Tibial artery (tissue), 4 donors: ENCODE measurements at regions of chr11 and their contacts with region 1.

Region 1: DNA sequence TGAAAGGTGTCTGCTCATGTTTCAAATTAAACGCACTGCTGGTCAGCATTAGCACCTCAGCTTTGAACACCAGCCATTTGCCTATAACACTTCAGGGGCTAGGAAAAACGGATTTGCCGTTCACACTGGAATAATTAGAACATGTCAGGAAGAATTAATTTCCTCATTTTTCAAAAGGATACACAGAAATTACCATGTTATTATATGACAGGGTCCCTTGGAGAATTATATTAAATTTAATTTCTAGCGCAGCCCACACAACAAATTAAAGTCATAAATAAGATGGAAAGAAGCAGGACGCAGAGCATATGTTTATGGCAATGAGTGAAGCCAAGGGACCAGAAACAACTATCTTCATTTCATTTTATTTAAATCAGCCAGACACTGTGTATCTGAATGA is 83.8 kb upstream of the SOX6 start:
- DNase-seq: no peak
- H3K4me3 ChIP-seq: no peak overlapping the region
- H3K27ac ChIP-seq: no peak overlapping the region
- H3K4me1 ChIP-seq: no peaks in the 10 kb centered on the region
- H3K27me3 ChIP-seq: no peaks in the 10 kb centered on the region
- CTCF ChIP-seq: no peak

Region 2: GRCh38 chr11:16169541-16169940 is 270.6 kb before region 1 on chr11:
- intact Hi-C with region 1: no loop called
- DNase-seq: no peak
- H3K4me3 ChIP-seq: no peak overlapping the region
- H3K27ac ChIP-seq: no peak overlapping the region
- H3K4me1 ChIP-seq: peaks cover 0 to 11% (median 0%) of the 10 kb centered on the region in 4 donors
- H3K27me3 ChIP-seq: no peaks in the 10 kb centered on the region
- CTCF ChIP-seq: no peak

Region 3: DNA sequence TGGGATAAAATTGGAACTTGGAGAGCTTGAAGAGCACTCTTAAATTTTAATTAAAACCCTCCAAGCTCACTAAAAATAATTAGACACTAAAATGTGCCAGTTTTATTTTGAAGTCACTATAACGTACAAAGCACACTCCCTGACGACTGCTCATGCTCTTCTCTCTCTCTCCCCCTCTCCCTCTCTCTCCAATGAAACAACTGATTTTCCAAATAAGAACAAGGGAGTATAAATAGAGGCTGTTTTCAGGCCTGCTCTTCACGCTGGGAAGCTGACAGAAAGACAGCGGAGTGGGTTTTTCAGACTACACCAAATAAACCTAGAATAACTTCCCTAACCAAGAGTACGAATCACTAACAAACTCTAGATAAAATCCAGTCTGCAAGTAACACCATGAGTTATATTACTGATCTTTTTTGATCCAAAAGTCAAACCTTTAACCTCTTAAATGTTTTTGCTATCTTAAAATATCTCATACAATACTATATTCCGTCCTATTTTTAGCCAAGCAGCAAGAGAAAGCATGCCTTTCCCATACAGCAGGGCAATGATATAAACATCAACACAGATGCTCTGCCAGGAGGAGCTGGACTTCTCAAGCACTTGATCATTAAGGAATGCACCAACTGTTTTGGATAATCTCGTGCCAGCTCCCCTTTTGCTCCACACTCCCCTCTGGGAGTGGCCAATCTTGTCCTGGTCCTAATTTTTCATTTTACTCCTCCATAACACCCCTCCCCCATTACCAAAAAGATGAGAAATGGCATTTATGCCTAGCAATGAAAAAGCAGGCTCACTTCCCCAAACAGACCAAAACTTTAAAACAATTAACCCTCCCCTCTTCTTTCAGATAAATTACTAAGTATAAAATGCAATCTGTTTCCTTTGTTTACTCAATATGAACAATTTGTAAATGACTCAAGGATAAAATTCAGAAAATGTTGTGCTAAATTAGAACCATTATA is 200.7 kb before region 1 on chr11:
- intact Hi-C with region 1: no loop called
- DNase-seq: no peak
- H3K4me3 ChIP-seq: peak overlapping the region; percentile 2 to 16
- H3K27ac ChIP-seq: peak overlapping the region; percentile 58 to 72
- H3K4me1 ChIP-seq: peaks cover 0 to 40% (median 0%) of the 10 kb centered on the region in 4 donors
- H3K27me3 ChIP-seq: no peaks in the 10 kb centered on the region
- CTCF ChIP-seq: no peak

Region 4: GRCh38 chr11:16412525-16413172 is 27.5 kb before region 1 on chr11:
- intact Hi-C with region 1: no loop called
- DNase-seq: no peak
- H3K4me3 ChIP-seq: no peak overlapping the region
- H3K27ac ChIP-seq: no peak overlapping the region
- H3K4me1 ChIP-seq: peaks cover 0 to 14% (median 2%) of the 10 kb centered on the region in 4 donors
- H3K27me3 ChIP-seq: no peaks in the 10 kb centered on the region
- CTCF ChIP-seq: no peak

Region 5: GRCh38 chr11:16561150-16561549 is 121.0 kb after region 1 on chr11:
- intact Hi-C with region 1: no loop called
- DNase-seq: no peak
- H3K4me3 ChIP-seq: no peak overlapping the region
- H3K27ac ChIP-seq: no peak overlapping the region
- H3K4me1 ChIP-seq: peaks cover 0 to 5% (median 0%) of the 10 kb centered on the region in 4 donors
- H3K27me3 ChIP-seq: no peaks in the 10 kb centered on the region
- CTCF ChIP-seq: no peak

Region 6: DNA sequence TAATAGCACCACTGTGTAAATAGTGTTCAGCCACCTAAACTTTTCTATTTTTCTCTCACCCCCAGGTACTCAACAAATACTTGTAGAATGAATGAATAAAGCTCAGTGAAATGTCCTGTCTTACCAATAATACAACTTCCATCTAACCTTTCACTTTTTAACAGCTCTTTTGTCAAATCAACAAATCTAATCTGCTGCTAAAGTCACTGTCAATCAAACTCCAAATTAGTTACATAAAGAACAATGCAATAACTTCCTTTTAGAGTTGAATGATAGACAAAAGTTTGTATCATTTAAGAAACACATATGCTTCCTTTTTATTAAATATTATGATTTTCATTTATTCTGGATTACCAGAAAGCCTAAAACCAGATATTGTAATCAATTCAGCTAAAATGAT is 263.7 kb after region 1 on chr11:
- intact Hi-C with region 1: loop called (anchors 10 kb)
- DNase-seq: no peak
- H3K4me3 ChIP-seq: no peak overlapping the region
- H3K27ac ChIP-seq: no peak overlapping the region
- H3K4me1 ChIP-seq: no peaks in the 10 kb centered on the region
- H3K27me3 ChIP-seq: no peaks in the 10 kb centered on the region
- CTCF ChIP-seq: no peak